Activated T-helper 2 cell treated with anti-CD3 and anti-CD28 coated beads, Interferon-gamma antibody, Interleukin-2, Interleukin-4, amounts not matched to agents 10 μg/mL and 5 μg/mL and 100 μg/mL, durations not matched to agents 14 hours and 24 hours and 36 hours (primary cell): ENCODE measurements at regions of chr12 and their contacts with region 1.

Region 1: GRCh38 chr12:116236148-116236731 is 41.3 kb downstream of the MED13L start:
- DNase-seq: peak; percentile 27
- H3K4me3 Mint-ChIP-seq: no peak overlapping the region
- H3K27ac Mint-ChIP-seq: no peak overlapping the region
- H3K4me1 Mint-ChIP-seq: peaks cover 22% of the 10 kb centered on the region
- H3K27me3 Mint-ChIP-seq: no peaks in the 10 kb centered on the region

Region 2: GRCh38 chr12:115835445-115835844 is 400.8 kb before region 1 on chr12:
- intact Hi-C with region 1: no loop called
- DNase-seq: no peak
- H3K4me3 Mint-ChIP-seq: no peak overlapping the region
- H3K27ac Mint-ChIP-seq: no peak overlapping the region
- H3K4me1 Mint-ChIP-seq: no peaks in the 10 kb centered on the region
- H3K27me3 Mint-ChIP-seq: no peaks in the 10 kb centered on the region

Region 3: GRCh38 chr12:115998119-115998633 is 238.1 kb before region 1 on chr12:
- intact Hi-C with region 1: loop called (anchors 5 kb)
- DNase-seq: no peak
- H3K4me3 Mint-ChIP-seq: no peak overlapping the region
- H3K27ac Mint-ChIP-seq: no peak overlapping the region
- H3K4me1 Mint-ChIP-seq: peaks cover 5% of the 10 kb centered on the region
- H3K27me3 Mint-ChIP-seq: no peaks in the 10 kb centered on the region

Region 4: DNA sequence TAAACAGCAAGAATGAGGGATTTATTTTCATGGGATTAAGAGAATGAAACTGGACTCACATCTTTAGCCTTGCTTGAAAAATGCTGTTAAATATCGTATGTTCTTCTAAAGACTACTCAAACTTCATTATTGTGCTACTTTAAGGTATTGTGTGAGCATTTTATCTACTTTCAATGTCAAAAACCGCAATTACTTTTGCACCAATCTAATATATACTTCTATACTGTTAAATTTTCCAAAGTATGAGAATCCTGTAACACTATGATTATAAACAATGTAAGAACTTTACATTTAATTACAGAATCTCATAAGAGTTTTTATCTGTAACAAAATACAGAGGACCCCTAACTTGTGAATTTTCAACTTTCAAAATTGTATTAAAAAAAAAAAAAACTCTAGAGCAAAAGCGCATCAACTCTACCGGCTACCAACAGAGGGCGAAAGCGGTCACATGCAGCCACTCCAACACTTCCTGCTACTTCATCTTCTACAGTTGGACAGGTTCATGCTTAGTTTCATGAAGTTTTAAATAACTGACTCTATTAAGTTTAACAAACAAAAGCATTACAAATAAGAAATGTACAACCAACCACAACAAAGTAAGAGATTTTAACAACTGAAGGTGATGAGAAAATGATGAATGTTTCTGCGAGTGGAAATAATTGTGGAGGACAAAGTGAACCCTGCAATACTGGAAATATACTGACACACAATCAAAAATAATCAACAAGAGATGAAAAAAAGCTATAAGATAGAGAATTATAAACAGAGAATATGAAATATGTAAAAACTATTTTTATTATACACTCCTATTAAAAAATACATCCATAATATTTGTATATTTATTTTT is 169.6 kb before region 1 on chr12:
- intact Hi-C with region 1: loop called (anchors 5 kb)
- DNase-seq: peak; percentile 40
- H3K4me3 Mint-ChIP-seq: no peak overlapping the region
- H3K27ac Mint-ChIP-seq: no peak overlapping the region
- H3K4me1 Mint-ChIP-seq: peaks cover 17% of the 10 kb centered on the region
- H3K27me3 Mint-ChIP-seq: no peaks in the 10 kb centered on the region

Region 5: GRCh38 chr12:116080415-116080814 is 155.8 kb before region 1 on chr12:
- intact Hi-C with region 1: loop called (anchors 5 kb)
- DNase-seq: no peak
- H3K4me3 Mint-ChIP-seq: no peak overlapping the region
- H3K27ac Mint-ChIP-seq: no peak overlapping the region
- H3K4me1 Mint-ChIP-seq: peaks cover 16% of the 10 kb centered on the region
- H3K27me3 Mint-ChIP-seq: no peaks in the 10 kb centered on the region

Region 6: DNA sequence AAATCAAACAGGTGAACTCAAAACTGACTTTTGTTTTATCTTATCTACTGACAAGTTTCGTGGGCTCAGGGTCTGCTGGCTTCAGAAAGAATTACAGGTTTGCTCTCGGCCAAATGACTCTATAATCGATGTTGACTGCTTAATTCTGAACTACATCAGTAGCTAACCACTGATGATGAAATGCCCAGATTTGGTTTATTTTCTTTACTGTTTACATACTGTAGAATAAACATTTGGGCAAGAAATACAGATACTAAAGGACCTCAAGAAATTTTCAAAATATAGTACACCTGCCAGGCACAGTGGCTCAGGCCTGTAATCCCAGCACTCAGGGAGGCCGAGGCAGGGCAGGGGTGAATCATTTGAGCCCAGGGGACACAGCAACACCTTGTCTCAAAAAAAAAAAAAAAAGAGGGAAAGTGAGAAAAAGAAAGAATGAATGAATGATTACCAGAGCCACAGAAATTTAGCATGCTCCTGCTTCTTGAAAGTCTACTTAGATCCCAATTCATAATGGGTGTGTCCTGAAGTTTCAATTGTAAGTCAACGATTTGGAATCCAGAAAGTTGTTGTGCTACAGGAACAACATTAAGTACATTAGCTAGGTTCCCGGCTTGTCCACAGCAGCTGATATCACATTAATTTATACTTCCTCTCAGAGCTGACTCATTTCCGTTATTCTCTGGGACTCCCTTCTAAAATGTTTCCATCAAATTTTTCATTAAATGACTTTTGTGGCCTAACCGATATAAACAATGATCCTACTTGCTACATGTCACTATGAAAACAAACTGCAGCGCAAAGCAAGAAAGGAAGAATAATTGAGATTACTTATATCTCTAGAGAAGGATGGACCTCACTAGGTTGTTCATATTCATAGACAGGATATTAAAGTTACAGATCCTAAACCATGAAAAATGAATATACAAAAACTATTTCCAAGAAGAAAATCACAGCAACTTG is 93.0 kb before region 1 on chr12:
- intact Hi-C with region 1: loop called (anchors 1 kb)
- DNase-seq: no peak
- H3K4me3 Mint-ChIP-seq: no peak overlapping the region
- H3K27ac Mint-ChIP-seq: peak overlapping the region; percentile 67
- H3K4me1 Mint-ChIP-seq: peaks cover 45% of the 10 kb centered on the region
- H3K27me3 Mint-ChIP-seq: no peaks in the 10 kb centered on the region